ENCODE measurements at regions of chr19 and their contacts with region 1.

Region 1: DNA sequence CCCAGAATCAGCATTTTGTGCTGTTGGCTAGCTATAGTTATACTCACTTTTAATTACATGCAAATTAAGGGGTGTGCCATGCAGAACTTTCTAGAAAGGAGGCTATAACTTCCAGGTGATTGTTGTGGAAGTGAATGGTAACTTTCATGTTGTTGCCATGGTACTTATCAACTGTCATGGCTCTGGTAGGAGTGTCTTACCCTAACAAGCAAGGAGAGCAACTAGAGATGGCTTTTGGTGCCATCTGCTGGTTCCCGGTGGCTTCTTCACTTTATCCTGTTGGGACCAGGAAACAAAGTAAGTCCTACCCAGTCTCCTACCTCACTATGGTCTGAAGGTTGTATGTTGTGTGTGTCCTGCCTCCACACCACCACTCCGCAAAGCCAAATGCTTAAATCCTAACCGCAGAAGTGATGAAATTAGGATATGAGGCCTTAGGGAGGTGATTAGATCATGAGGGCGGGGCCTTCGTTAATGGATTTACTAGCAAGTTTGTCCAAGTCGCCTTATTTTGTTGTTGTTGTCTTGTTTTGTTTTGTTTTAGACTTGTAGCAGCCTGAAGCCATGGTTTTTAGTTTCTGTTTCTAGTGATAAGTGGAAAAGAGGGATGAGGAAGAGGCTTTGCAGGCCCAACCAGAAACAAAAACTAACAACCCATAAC is 22.6 kb downstream of the FBXL12 start:
- DNase-seq: peak; percentile 88
- ATAC-seq: peak; percentile 71
- H3K4me3 ChIP-seq: 0 out of 4 replicates have a peak overlapping the region, but pooled peaks of 1 of the 2 experiments have one; percentile 14
- H3K27ac ChIP-seq: no peak overlapping the region
- H3K4me1 ChIP-seq: no peaks in the 10 kb centered on the region
- H3K27me3 ChIP-seq: no peaks in the 10 kb centered on the region
- CTCF ChIP-seq: peak; percentile 82

Region 2: DNA sequence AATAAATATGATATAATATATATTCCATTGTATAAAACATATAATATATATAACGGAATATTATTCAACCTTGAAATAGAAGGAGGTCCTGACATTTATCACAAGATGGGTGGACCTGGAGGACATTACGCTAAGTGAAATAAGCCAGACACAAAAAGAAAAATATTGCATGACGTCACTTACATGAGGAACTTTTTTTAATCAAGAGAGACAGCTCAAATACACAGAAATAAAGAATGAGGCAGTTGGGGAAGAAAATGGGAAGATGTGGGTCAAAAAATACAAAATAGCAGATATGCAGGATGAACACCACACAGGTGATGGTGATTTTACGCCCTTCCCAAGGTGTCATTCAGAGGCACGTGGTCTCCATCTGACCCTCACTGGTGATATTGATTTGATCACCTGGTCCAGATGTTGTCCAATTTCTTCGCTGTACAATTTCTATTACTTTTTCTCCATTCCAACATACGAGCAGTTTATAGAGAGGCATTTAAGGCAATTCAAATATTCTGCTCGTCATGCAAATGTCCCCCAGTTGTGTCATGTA is 656.6 kb before region 1 on chr19:
- CTCF ChIA-PET with region 1: no interaction called
- POLR2A ChIA-PET with region 1: no interaction called
- in situ Hi-C with region 1: no loop called
- intact Hi-C with region 1: loop called (anchors 5 kb)
- DNase-seq: no peak
- ATAC-seq: 0 out of 2 replicates have a peak, but pooled peaks have one; percentile 10
- H3K4me3 ChIP-seq: peak overlapping the region; percentile 97
- H3K27ac ChIP-seq: peak overlapping the region; percentile 96
- H3K4me1 ChIP-seq: no peaks in the 10 kb centered on the region
- H3K27me3 ChIP-seq: no peaks in the 10 kb centered on the region
- CTCF ChIP-seq: no peak

Region 3: GRCh38 chr19:9597027-9597426 is 199.2 kb before region 1 on chr19:
- CTCF ChIA-PET with region 1: no interaction called
- POLR2A ChIA-PET with region 1: no interaction called
- in situ Hi-C with region 1: no loop called
- intact Hi-C with region 1: no loop called
- DNase-seq: peak; percentile 63
- ATAC-seq: no peak
- H3K4me3 ChIP-seq: no peak overlapping the region
- H3K27ac ChIP-seq: no peak overlapping the region
- H3K4me1 ChIP-seq: no peaks in the 10 kb centered on the region
- H3K27me3 ChIP-seq: no peaks in the 10 kb centered on the region
- CTCF ChIP-seq: no peak

Region 4: GRCh38 chr19:9674663-9675357 is 121.4 kb before region 1 on chr19 and contains the start of gene ZNF562:
- CTCF ChIA-PET with region 1: no interaction called
- POLR2A ChIA-PET with region 1: interaction called, 15 read pairs
- in situ Hi-C with region 1: no loop called
- intact Hi-C with region 1: no loop called
- DNase-seq: peak; percentile 47
- ATAC-seq: peak; percentile 99
- H3K4me3 ChIP-seq: peak within 1 kb of the TSS; percentile 72 to 87
- H3K27ac ChIP-seq: peak within 1 kb of the TSS; percentile 98
- H3K4me1 ChIP-seq: no peaks in the 10 kb centered on the region
- H3K27me3 ChIP-seq: no peaks in the 10 kb centered on the region
- CTCF ChIP-seq: no peak
- total RNA-seq, gene ZNF562: 29.5 TPM

Region 5: GRCh38 chr19:9768175-9769112 is 27.8 kb before region 1 on chr19 and contains the start of gene ZNF846:
- CTCF ChIA-PET with region 1: no interaction called
- POLR2A ChIA-PET with region 1: no interaction called
- in situ Hi-C with region 1: no loop called
- intact Hi-C with region 1: no loop called
- DNase-seq: peak; percentile 79
- ATAC-seq: peak; percentile 100
- H3K4me3 ChIP-seq: peak within 1 kb of the TSS; percentile 80 to 89
- H3K27ac ChIP-seq: peak within 1 kb of the TSS; percentile 93
- H3K4me1 ChIP-seq: no peaks in the 10 kb centered on the region; the same call in 1 of the 2 replicates
- H3K27me3 ChIP-seq: no peaks in the 10 kb centered on the region
- CTCF ChIP-seq: no peak
- total RNA-seq, gene ZNF846: 10.2 TPM

Measured in Panc1 (cell line).